ENCODE measurements at regions of chr5 and their contacts with region 1.

Region 1: DNA sequence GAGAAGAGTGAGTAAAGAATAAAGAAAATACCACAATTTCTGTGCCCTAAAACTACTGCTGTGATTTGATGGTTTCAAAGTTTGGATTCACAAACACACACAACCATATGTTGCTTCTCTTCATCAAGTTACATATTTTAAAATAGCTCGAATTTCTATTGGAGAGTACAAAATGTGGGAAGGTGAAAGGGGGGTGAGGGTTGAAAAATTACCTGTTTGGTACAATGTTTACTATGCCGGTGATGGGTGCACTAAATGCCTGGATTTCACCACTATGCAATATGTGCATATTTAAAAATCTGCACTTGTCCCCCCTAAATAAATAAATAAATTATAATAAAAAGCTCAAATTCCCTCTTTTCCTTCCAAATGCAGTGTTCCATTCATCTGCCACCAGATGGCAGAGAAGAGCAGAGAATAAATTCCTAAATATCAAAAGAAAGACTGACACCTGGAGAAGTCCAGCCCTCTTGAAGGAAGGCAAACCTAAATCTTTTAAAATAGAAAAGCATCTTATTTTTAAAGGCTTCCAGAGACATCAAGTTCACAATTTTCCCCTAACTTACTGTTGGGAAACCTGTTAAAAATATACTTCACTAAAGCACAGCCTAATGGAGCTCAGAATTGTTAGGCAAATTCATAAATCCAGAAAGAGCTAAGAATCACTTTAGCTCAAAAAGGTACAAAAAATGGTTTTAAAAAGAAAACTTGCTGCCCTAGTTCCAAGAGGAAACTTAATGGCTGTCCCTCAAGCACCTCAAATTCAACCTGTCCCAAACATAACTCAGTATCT is 24.8 kb upstream of the HNRNPA0 start:
- DNase-seq: no peak
- H3K4me3 ChIP-seq: no peak overlapping the region
- H3K27ac ChIP-seq: no peak overlapping the region
- H3K4me1 ChIP-seq: peaks cover 0 to 5% (median 0%) of the 10 kb centered on the region in 6 donors
- H3K27me3 ChIP-seq: no peaks in the 10 kb centered on the region
- CTCF ChIP-seq: peak; percentile 53 to 87 (median 74)
- POLR2A ChIP-seq: no peak

Region 2: DNA sequence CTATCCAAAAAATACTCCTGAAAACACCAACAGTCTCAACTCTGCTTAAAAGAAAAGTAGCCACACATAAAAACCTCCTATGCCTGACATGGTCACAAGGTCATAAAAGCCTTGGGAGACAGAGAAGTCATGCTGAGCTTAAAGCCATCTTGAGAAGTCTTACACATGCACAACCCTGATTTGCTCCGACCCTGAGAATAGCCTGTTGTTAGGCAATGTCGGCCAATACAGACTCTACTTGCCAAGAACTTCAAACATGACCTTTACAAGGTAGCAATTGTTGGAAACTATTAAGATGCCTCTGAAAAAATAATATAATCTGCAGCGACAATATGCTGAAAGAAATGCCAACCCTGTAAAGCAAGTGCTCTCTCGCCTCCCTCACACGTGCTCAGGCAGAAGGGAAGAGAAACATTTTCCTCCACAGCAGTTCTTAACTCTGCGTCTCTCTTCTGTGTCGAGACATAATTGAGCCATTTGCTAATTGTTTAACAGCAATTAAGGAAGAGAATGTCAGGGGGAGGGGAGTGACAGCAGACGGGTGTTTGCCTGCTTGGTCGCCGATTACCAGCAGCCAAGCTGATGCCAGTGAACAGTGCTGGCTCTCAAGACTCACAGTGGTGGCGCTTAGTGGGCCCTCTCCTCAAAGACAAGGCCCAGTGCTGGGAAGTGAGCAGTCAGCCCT is 673.5 kb before region 1 on chr5:
- intact Hi-C with region 1: no loop called
- DNase-seq: no peak
- H3K4me3 ChIP-seq: no peak overlapping the region
- H3K27ac ChIP-seq: no peak overlapping the region
- H3K4me1 ChIP-seq: no peaks in the 10 kb centered on the region
- H3K27me3 ChIP-seq: no peaks in the 10 kb centered on the region
- CTCF ChIP-seq: no peak
- POLR2A ChIP-seq: no peak

Region 3: GRCh38 chr5:137822158-137822764 is 43.3 kb after region 1 on chr5:
- intact Hi-C with region 1: loop called (anchors 10 kb)
- DNase-seq: no peak
- H3K4me3 ChIP-seq: no peak overlapping the region
- H3K27ac ChIP-seq: no peak overlapping the region
- H3K4me1 ChIP-seq: no peaks in the 10 kb centered on the region
- H3K27me3 ChIP-seq: no peaks in the 10 kb centered on the region
- CTCF ChIP-seq: peak in 7 of 11 experiments; percentile 27 to 52 (median 34)
- POLR2A ChIP-seq: no peak

Region 4: DNA sequence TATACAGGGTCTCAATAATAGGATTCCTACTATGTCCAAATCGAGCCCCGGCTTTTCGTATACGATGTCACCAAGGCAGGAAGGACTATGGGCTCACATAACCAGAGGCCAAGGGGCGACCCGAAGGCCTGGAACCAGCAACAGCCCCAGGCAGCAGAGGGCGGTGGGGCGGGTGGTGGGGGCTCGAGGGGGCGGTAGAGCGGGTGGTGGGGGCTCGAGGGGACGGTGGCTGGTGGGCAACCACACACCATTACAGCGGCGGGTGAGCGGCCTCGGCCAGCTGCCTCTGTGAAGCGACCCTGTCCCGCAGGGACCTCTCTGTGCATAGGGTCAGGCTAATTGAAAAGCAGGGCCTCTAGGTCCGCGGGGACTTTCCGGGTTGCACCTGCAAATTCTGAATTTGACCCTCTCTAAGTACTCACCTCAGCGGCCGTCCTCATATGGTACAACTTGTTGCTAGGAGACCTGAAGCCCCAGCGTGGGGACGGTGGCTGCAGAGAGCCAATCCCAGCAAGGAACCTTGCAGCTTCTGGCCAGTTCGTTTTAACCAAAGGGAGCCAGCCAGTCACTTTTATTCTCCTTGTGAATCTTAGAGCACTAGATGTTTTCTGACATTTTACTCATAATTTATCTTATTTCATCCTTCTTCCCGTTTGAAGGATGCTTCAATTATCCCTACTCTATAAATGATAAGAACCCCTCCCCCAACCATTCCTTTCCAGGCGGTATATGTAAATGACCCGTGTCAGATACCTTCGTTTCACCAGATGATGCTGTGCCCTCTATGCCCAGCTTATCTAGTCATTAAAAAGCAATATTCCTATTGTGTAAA is 360.2 kb after region 1 on chr5 and contains the start of gene NME5:
- intact Hi-C with region 1: loop called (anchors 10 kb)
- DNase-seq: peak; percentile 80
- H3K4me3 ChIP-seq: peak within 1 kb of the TSS; percentile 6 to 68 (median 38)
- H3K27ac ChIP-seq: no peak within 1 kb of the TSS
- H3K4me1 ChIP-seq: peaks cover 0 to 14% (median 5%) of the 10 kb centered on the region in 6 donors
- H3K27me3 ChIP-seq: peaks cover 0 to 35% (median 0%) of the 10 kb centered on the region in 7 donors
- CTCF ChIP-seq: no peak
- POLR2A ChIP-seq: no peak
- total RNA-seq, gene NME5: 0.55 to 1.3 (median 1.1) TPM in 3 of 7 donors, not detected in the others